ENCODE measurements at regions of chr9 and their contacts with region 1.

Region 1: GRCh38 chr9:23571414-23572104 is 254.5 kb downstream of the ELAVL2 start:
- DNase-seq: no peak
- H3K4me3 ChIP-seq: no peak overlapping the region
- H3K27ac ChIP-seq: no peak overlapping the region
- H3K4me1 ChIP-seq: no peaks in the 10 kb centered on the region
- H3K27me3 ChIP-seq: no peaks in the 10 kb centered on the region
- CTCF ChIP-seq: no peak

Region 2: DNA sequence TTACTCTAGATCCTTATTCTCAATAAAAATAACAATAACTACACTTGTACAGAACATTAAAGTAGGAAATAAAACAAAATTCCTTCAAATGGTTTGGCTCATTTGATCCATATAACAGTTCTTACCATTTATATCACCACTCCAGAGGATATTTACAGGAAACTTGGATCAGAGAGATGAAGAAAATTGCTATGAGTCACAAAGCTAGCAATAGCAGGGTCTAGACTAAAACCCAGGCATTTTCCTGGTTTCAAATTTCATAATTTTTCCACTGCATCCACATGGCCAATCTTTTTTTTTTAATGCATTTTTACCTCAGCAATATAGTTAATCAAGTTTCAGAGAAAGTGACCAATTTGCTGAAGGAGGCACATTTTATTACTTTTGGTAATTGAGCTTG is 44.8 kb before region 1 on chr9:
- intact Hi-C with region 1: no loop called
- DNase-seq: no peak
- H3K4me3 ChIP-seq: no peak overlapping the region
- H3K27ac ChIP-seq: no peak overlapping the region
- H3K4me1 ChIP-seq: no peaks in the 10 kb centered on the region
- H3K27me3 ChIP-seq: peaks cover 9% of the 10 kb centered on the region
- CTCF ChIP-seq: no peak

Region 3: DNA sequence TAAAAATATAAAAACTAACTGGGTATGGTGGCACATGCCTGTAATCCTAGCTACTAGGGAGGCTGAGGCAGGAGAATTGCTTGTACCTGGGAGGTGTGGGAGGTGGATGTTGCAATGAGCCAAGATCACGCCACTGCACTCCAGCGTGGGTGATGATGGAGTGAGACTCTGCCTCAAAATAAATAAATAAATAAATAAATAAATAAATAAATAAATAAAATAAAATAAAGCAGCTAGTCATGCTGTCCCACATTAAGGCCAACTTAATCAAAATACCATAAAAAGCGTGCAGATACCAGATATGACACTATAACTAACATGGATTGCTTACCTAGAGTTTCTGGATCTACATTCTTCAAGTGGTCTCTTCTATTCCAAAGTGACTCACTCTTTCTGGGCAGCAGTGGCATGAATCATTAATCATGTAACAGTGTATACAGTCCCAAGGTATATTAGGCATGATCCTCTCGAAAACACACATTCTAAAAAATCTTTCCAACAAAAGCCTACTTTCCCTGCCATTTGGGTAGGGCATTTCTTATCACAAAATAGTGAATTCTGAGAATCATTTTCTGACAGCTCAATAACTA is 67.4 kb after region 1 on chr9:
- intact Hi-C with region 1: loop called (anchors 10 kb)
- DNase-seq: no peak
- H3K4me3 ChIP-seq: no peak overlapping the region
- H3K27ac ChIP-seq: no peak overlapping the region
- H3K4me1 ChIP-seq: no peaks in the 10 kb centered on the region
- H3K27me3 ChIP-seq: no peaks in the 10 kb centered on the region
- CTCF ChIP-seq: no peak

Measured in left ventricle myocardium inferior (tissue), 1 donor.